Lower leg skin (tissue), 4 donors: ENCODE measurements at regions of chr20 and their contacts with region 1.

Region 1: DNA sequence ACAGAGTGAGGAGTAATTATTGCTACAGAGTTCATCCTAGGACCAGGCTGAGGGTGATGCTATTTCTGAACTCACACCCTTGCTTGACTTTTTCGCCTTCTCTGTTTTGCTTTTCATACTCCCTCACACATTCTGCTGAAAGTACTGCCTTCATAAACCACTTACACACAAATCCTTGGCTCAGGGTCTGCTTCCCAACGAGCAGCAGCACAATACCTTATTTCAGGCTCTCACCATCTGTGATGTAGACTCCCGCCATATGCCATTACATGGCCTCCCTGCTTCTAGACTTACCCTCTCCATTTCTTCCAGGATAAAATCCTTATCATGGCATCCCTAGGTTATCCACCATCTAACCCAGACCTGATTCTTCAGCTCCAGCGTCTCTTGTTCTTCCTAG is 321.3 kb upstream of the SPTLC3 start:
- DNase-seq: no peak
- H3K4me3 ChIP-seq: no peak overlapping the region
- CTCF ChIP-seq: no peak
- POLR2A ChIP-seq: no peak

Region 2: GRCh38 chr20:12659942-12660341 is 27.5 kb before region 1 on chr20:
- intact Hi-C with region 1: loop called (anchors 2 kb)
- DNase-seq: no peak
- H3K4me3 ChIP-seq: no peak overlapping the region
- CTCF ChIP-seq: no peak
- POLR2A ChIP-seq: no peak